Activated CD8-positive, alpha-beta T cell treated with anti-CD3 and anti-CD28 coated beads, Interleukin-2, amount 10 ng/mL, durations not matched to agents 7 days and 5 days (primary cell): ENCODE measurements at regions of chr22 and their contacts with region 1.

Region 1: DNA sequence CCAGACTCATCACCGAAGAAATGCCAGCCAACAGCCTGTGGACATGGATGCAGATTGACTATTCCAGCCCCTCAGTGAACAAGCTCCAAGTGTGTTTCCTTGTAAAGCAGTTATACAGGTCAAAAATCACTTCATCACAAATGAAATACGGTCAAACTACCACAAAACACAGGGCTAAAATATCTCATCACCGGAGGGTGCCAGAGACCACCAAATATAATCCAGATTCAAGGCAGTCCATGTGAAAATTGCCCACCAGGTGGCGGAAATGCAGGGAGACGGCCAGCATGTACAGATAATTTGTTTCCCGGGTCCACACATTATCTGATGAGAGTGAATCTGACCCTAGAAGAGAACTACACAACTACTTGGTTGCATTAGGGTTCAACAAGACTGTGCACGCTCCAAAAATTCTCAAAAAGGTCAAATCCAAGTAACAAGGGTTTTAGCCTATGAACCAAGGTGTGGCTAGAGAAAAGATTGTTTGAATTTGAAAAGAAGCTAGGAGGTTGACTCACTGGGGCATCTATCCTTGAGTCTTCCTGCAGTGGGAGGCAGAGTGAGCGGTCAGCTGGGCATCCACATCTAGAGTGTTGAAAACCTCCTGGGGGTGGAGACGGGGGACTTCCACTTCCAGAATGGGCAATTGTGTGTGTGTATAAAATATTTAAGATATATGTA is 71.7 kb downstream of the IGLL5 start:
- DNase-seq: peak; percentile 86
- ATAC-seq: peak; percentile 78
- H3K4me3 Mint-ChIP-seq: no peak overlapping the region
- H3K27ac Mint-ChIP-seq: no peak overlapping the region
- H3K4me1 Mint-ChIP-seq: no peaks in the 10 kb centered on the region
- H3K27me3 Mint-ChIP-seq: peaks cover 34% of the 10 kb centered on the region

Region 2: GRCh38 chr22:22753526-22754267 is 205.6 kb before region 1 on chr22:
- CTCF ChIA-PET with region 1: interaction called, 37 read pairs
- POLR2A ChIA-PET with region 1: no interaction called
- DNase-seq: peak; percentile 86
- ATAC-seq: peak; percentile 97
- H3K4me3 Mint-ChIP-seq: no peak overlapping the region
- H3K27ac Mint-ChIP-seq: no peak overlapping the region
- H3K4me1 Mint-ChIP-seq: peaks cover 34% of the 10 kb centered on the region
- H3K27me3 Mint-ChIP-seq: peaks cover 6% of the 10 kb centered on the region

Region 3: DNA sequence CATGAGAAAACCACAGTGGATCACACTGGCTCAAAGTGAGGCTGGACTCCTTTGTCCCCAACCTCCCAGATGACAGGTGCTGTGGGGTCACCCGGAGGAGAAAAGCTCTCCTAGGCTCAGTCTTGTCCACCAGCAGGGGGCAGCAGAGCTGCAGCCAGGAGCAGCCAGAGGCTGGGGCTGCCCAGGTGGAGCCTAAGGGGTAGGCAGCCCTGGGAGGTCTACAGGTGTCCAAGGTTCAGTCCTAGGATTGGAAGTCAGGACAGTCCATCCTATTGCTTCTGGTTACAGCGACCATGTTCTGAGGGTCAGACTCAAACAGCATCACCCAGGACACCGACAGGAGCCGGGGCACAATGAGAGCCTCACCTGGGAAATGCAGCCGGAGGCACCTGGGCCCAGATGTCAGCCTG is 149.3 kb before region 1 on chr22:
- CTCF ChIA-PET with region 1: interaction called, 26 read pairs
- POLR2A ChIA-PET with region 1: no interaction called
- DNase-seq: peak; percentile 75
- ATAC-seq: peak; percentile 88
- H3K4me3 Mint-ChIP-seq: no peak overlapping the region
- H3K27ac Mint-ChIP-seq: no peak overlapping the region
- H3K4me1 Mint-ChIP-seq: peaks cover 5% of the 10 kb centered on the region
- H3K27me3 Mint-ChIP-seq: peaks cover 24% of the 10 kb centered on the region

Region 4: GRCh38 chr22:22942511-22943329 is 16.6 kb before region 1 on chr22:
- CTCF ChIA-PET with region 1: interaction called, 27 read pairs
- POLR2A ChIA-PET with region 1: no interaction called
- DNase-seq: peak; percentile 85
- ATAC-seq: peak; percentile 89
- H3K4me3 Mint-ChIP-seq: no peak overlapping the region
- H3K27ac Mint-ChIP-seq: no peak overlapping the region
- H3K4me1 Mint-ChIP-seq: no peaks in the 10 kb centered on the region
- H3K27me3 Mint-ChIP-seq: peaks cover 21% of the 10 kb centered on the region

Region 5: GRCh38 chr22:23000657-23001347 is 41.5 kb after region 1 on chr22:
- CTCF ChIA-PET with region 1: no interaction called
- POLR2A ChIA-PET with region 1: no interaction called
- DNase-seq: no peak
- ATAC-seq: no peak
- H3K4me3 Mint-ChIP-seq: no peak overlapping the region
- H3K27ac Mint-ChIP-seq: no peak overlapping the region
- H3K4me1 Mint-ChIP-seq: no peaks in the 10 kb centered on the region
- H3K27me3 Mint-ChIP-seq: peaks cover 47% of the 10 kb centered on the region

Region 6: GRCh38 chr22:23119494-23120414 is 160.5 kb after region 1 on chr22:
- CTCF ChIA-PET with region 1: interaction called, 146 read pairs
- POLR2A ChIA-PET with region 1: no interaction called
- DNase-seq: peak; percentile 57
- ATAC-seq: peak; percentile 68
- H3K4me3 Mint-ChIP-seq: no peak overlapping the region
- H3K27ac Mint-ChIP-seq: peak overlapping the region; percentile 80
- H3K4me1 Mint-ChIP-seq: peaks cover 16% of the 10 kb centered on the region
- H3K27me3 Mint-ChIP-seq: no peaks in the 10 kb centered on the region

Region 7: GRCh38 chr22:23281406-23282088 is 322.3 kb after region 1 on chr22:
- CTCF ChIA-PET with region 1: interaction called, 19 read pairs
- POLR2A ChIA-PET with region 1: no interaction called
- DNase-seq: peak; percentile 87
- ATAC-seq: peak; percentile 74
- H3K4me3 Mint-ChIP-seq: no peak overlapping the region
- H3K27ac Mint-ChIP-seq: peak overlapping the region; percentile 68
- H3K4me1 Mint-ChIP-seq: peaks cover 26% of the 10 kb centered on the region
- H3K27me3 Mint-ChIP-seq: no peaks in the 10 kb centered on the region